ENCODE measurements at regions of chr9 and their contacts with region 1.

Region 1: GRCh38 chr9:27529316-27530278 is at the start of gene MOB3B:
- DNase-seq: no peak
- H3K4me3 ChIP-seq: peak within 1 kb of the TSS; percentile 56
- CTCF ChIP-seq: peak; percentile 85

Region 2: DNA sequence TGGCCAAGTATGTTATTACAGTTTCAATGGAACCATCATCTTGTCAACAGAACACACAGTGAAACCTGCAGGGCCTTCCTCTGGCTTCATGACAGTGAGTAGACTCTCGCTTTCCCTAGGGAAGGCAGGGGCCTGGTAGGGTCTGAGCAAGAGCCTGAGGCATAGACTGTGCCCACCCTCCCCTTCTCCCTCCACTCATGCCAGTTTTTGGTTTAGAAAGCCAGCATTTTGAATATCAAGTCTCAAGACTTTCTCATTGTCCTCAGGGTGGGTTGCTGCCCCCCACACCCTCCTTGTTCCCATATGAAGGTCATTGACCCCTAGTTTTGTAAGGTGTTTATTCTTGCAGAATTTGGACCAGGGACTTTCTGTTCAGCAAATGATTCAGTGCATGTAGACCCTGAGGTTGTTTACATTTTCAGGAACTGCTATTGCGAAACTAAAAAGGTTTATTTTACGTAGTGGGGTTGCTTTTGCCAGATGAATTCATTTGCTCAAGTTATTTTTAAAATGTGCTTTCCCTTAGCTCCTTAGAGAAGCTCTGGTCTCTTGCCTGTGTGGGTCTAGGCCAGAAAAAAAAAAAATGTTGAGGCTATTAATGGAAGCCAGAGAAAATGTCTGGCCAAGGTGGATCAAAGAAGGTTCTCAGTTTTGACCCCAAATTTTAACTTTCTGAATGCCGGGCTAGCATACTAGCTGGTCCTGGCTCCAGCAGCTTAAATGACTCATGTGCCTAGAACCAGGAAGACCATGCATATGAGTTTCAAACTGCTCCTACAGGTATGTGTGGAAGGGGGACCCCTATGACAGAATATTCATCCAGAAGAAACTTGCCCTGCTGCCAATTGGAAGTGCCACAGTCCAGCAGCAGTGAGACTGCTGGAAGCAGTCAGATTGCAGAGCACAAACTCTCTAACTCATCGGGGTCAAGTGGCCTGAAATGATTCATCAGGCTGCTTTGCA is 10.2 kb after region 1 on chr9:
- CTCF ChIA-PET with region 1: interaction called, 55 read pairs
- POLR2A ChIA-PET with region 1: interaction called, 3 read pairs
- DNase-seq: peak; percentile 12
- H3K4me3 ChIP-seq: no peak overlapping the region
- CTCF ChIP-seq: no peak

Region 3: GRCh38 chr9:27548055-27548741 is 18.6 kb after region 1 on chr9:
- CTCF ChIA-PET with region 1: interaction called, 55 read pairs
- POLR2A ChIA-PET with region 1: no interaction called
- DNase-seq: no peak
- H3K4me3 ChIP-seq: no peak overlapping the region
- CTCF ChIP-seq: peak; percentile 7

Region 4: GRCh38 chr9:27554712-27555111 is 25.1 kb after region 1 on chr9:
- CTCF ChIA-PET with region 1: interaction called, 55 read pairs
- POLR2A ChIA-PET with region 1: no interaction called
- DNase-seq: no peak
- H3K4me3 ChIP-seq: no peak overlapping the region
- CTCF ChIP-seq: no peak

Region 5: GRCh38 chr9:27817747-27818146 is 288.1 kb after region 1 on chr9:
- CTCF ChIA-PET with region 1: no interaction called
- POLR2A ChIA-PET with region 1: no interaction called
- DNase-seq: no peak
- H3K4me3 ChIP-seq: no peak overlapping the region
- CTCF ChIP-seq: no peak

Measured in AG04449 (cell line).